Activated naive CD4-positive, alpha-beta T cell treated with anti-CD3 and anti-CD28 coated beads, Interleukin-2, amount 10 ng/mL, durations not matched to agents 7 days and 5 days (primary cell): ENCODE measurements at regions of chr11 and their contacts with region 1.

Region 1: GRCh38 chr11:130916238-130916855 is at the start of gene SNX19:
- DNase-seq: peak; percentile 92
- H3K4me3 Mint-ChIP-seq: peak within 1 kb of the TSS; percentile 82
- H3K27ac Mint-ChIP-seq: peak within 1 kb of the TSS; percentile 85
- H3K4me1 Mint-ChIP-seq: peaks cover 38% of the 10 kb centered on the region
- H3K27me3 Mint-ChIP-seq: peaks cover 4% of the 10 kb centered on the region

Region 2: GRCh38 chr11:130839981-130840666 is 76.2 kb before region 1 on chr11:
- CTCF ChIA-PET with region 1: no interaction called
- DNase-seq: no peak
- H3K4me3 Mint-ChIP-seq: no peak overlapping the region
- H3K27ac Mint-ChIP-seq: no peak overlapping the region
- H3K4me1 Mint-ChIP-seq: no peaks in the 10 kb centered on the region
- H3K27me3 Mint-ChIP-seq: peaks cover 21% of the 10 kb centered on the region

Region 3: GRCh38 chr11:130854483-130854882 is 61.9 kb before region 1 on chr11:
- CTCF ChIA-PET with region 1: no interaction called
- DNase-seq: no peak
- H3K4me3 Mint-ChIP-seq: no peak overlapping the region
- H3K27ac Mint-ChIP-seq: no peak overlapping the region
- H3K4me1 Mint-ChIP-seq: no peaks in the 10 kb centered on the region
- H3K27me3 Mint-ChIP-seq: peaks cover 6% of the 10 kb centered on the region

Region 4: DNA sequence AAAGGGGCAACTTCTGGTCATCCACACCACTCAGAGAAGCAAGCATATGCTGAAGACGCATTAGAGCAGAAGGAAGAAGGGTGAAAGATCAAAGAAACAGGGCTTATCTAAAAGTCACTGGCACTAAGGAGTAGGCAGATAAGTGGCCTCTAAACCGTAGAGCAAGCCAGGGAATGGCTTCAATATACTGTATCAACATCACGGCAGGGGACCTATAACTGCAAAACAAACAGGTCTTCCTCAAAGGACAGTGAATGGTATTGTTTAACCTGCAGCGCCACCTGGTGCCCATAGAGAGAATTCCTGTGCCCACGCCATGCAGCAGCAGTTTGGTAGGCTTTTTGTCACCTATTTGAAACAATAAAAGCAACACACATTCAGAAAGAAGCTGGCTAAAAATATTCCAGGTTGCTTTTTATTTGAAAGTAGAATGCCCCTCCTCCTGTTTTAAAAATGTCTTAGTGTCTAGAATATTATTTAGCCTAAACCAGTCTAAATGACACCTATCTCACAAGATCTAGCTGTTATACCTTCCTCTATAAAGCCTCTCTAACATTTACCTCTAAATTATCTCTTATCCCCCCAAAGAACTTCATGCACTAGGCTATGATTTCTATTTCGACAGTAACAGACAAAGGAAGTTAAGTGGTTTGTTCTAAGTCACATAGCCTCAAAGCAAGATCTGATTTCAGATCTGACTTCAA is 21.9 kb before region 1 on chr11:
- CTCF ChIA-PET with region 1: interaction called, 22 read pairs
- DNase-seq: peak; percentile 79
- H3K4me3 Mint-ChIP-seq: no peak overlapping the region
- H3K27ac Mint-ChIP-seq: no peak overlapping the region
- H3K4me1 Mint-ChIP-seq: no peaks in the 10 kb centered on the region
- H3K27me3 Mint-ChIP-seq: no peaks in the 10 kb centered on the region